Right cardiac atrium (tissue), 5 donors: ENCODE measurements at regions of chr9 and their contacts with region 1.

Region 1: DNA sequence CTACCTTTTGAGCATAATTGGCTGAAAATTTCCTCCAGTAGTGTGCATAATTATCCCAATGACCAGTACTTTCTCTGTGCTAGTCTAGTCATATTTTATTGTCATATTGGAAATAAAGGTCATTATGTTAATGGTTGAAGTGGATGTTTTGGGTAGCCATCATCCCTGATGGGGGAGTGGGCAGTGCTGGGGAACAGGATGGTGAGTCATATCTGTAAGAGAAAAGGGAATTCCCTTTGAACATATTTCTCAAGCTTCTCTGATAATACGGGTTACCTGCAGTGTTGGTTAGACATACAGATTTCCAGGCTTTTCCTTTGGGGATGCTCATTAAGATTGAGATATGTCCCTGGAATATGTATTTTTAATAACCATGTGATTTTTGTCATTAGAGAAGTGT is 33.3 kb upstream of the SPATA31D4 start:
- DNase-seq: no peak
- ATAC-seq: no peak
- H3K4me3 ChIP-seq: no peak overlapping the region
- H3K27ac ChIP-seq: no peak overlapping the region
- H3K4me1 ChIP-seq: no peaks in the 10 kb centered on the region
- H3K27me3 ChIP-seq: no peaks in the 10 kb centered on the region

Region 2: GRCh38 chr9:80928697-80929096 is 966.2 kb before region 1 on chr9:
- intact Hi-C with region 1: loop called in 1 of 4 experiments (anchors 5 kb)
- DNase-seq: no peak
- ATAC-seq: no peak
- H3K4me3 ChIP-seq: no peak overlapping the region
- H3K27ac ChIP-seq: no peak overlapping the region
- H3K4me1 ChIP-seq: no peaks in the 10 kb centered on the region
- H3K27me3 ChIP-seq: no peaks in the 10 kb centered on the region